GM13976 (cell line): ENCODE measurements at regions of chr9 and their contacts with region 1.

Region 1: GRCh38 chr9:68685770-68686169 is 19.3 kb upstream of the PIP5K1B start:
- DNase-seq: peak; percentile 48
- CTCF ChIP-seq: peak; percentile 72

Region 2: GRCh38 chr9:68446836-68447235 is 238.9 kb before region 1 on chr9:
- in situ Hi-C with region 1: no loop called
- DNase-seq: no peak
- CTCF ChIP-seq: no peak

Region 3: GRCh38 chr9:68872026-68872501 is 186.3 kb after region 1 on chr9:
- in situ Hi-C with region 1: no loop called
- DNase-seq: no peak
- CTCF ChIP-seq: no peak

Region 4: DNA sequence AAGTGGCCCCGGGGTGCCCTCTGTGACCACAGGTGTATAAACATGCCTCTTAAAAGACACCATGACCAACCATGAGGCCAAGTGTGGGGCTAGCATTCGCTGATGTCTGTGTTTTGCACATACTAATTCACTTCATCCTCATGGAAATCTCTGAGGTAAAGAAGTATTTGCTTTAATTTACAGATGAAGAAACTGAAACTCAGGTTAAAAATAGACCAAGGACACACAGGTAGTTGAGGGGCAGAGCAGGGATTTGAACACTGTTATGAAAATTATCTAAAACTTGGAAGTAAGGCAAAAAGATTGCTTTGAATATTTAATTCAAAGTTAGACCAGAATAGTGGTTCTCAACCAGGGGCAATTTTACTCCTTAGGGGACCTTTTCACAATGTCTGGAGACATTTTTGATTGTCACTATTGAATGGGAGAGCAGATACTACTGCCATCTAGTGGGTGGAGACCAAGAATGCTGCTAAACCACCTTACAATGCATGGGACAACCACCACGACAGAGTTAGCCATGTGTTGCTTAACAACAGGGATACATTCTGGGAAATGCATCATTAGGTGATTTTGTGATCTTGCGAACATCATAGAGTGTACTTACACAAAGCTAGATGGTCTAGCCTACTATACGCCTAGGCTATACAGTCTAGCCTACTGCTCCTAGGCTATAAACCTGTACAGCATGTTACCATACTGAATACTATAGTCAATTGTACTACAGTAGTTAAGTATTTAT is 341.8 kb after region 1 on chr9:
- in situ Hi-C with region 1: loop called (anchors 10 kb)
- DNase-seq: peak; percentile 70
- CTCF ChIP-seq: peak; percentile 63

Region 5: GRCh38 chr9:69452110-69452782 is 766.5 kb after region 1 on chr9:
- in situ Hi-C with region 1: no loop called
- DNase-seq: no peak
- CTCF ChIP-seq: no peak